Breast epithelium (tissue), 4 donors: ENCODE measurements at regions of chr16 and their contacts with region 1.

Region 1: GRCh38 chr16:61014869-61015268 is 1021.4 kb downstream of the CDH8 start:
- DNase-seq: no peak
- H3K4me3 ChIP-seq: no peak overlapping the region
- H3K27ac ChIP-seq: no peak overlapping the region
- H3K4me1 ChIP-seq: no peaks in the 10 kb centered on the region
- H3K27me3 ChIP-seq: no peaks in the 10 kb centered on the region
- CTCF ChIP-seq: no peak
- POLR2A ChIP-seq: no peak

Region 2: GRCh38 chr16:60821661-60822060 is 193.2 kb before region 1 on chr16:
- intact Hi-C with region 1: loop called (anchors 5 kb)
- DNase-seq: no peak
- H3K4me3 ChIP-seq: no peak overlapping the region
- H3K27ac ChIP-seq: no peak overlapping the region
- H3K4me1 ChIP-seq: no peaks in the 10 kb centered on the region
- H3K27me3 ChIP-seq: no peaks in the 10 kb centered on the region
- CTCF ChIP-seq: no peak
- POLR2A ChIP-seq: no peak

Region 3: DNA sequence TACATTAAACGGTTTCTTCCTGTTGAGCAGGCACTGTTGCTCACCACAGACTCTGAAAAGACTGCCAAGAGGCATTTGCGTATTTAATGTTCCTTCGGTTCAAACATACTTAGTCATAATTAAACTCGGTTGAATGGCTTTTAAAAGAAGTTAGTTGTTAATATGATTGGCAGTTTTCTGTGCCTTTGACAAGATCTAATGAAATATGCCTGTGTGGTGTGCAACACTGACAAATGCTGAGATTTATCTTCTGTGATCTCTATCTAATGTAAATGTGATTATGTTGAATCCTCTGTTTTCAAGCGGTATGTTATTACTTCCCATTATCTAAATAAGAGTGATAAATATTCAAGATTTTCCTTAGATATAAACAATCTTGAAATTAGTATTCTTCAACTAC is 25.3 kb before region 1 on chr16:
- intact Hi-C with region 1: no loop called
- DNase-seq: no peak
- H3K4me3 ChIP-seq: no peak overlapping the region
- H3K27ac ChIP-seq: no peak overlapping the region
- H3K4me1 ChIP-seq: no peaks in the 10 kb centered on the region
- H3K27me3 ChIP-seq: no peaks in the 10 kb centered on the region
- CTCF ChIP-seq: no peak
- POLR2A ChIP-seq: no peak

Region 4: GRCh38 chr16:61002479-61003204 is 12.2 kb before region 1 on chr16:
- intact Hi-C with region 1: loop called (anchors 2 kb)
- DNase-seq: no peak
- H3K4me3 ChIP-seq: no peak overlapping the region
- H3K27ac ChIP-seq: no peak overlapping the region
- H3K4me1 ChIP-seq: no peaks in the 10 kb centered on the region
- H3K27me3 ChIP-seq: no peaks in the 10 kb centered on the region
- CTCF ChIP-seq: no peak
- POLR2A ChIP-seq: no peak

Region 5: GRCh38 chr16:61165797-61166196 is 150.9 kb after region 1 on chr16:
- intact Hi-C with region 1: no loop called
- DNase-seq: no peak
- H3K4me3 ChIP-seq: no peak overlapping the region
- H3K27ac ChIP-seq: no peak overlapping the region
- H3K4me1 ChIP-seq: no peaks in the 10 kb centered on the region
- H3K27me3 ChIP-seq: no peaks in the 10 kb centered on the region
- CTCF ChIP-seq: no peak
- POLR2A ChIP-seq: no peak